GM12878 (cell line): ENCODE measurements at regions of chr11 and their contacts with region 1.

Region 1: GRCh38 chr11:108121274-108122155 is at the start of gene ACAT1:
- DNase-seq: peak; percentile 71
- ATAC-seq: peak; percentile 98
- H3K4me3 ChIP-seq: peak within 1 kb of the TSS; percentile 73
- H3K27ac ChIP-seq: peak within 1 kb of the TSS; percentile 65
- H3K4me1 ChIP-seq: peaks cover 10% of the 10 kb centered on the region
- H3K27me3 ChIP-seq: no peaks in the 10 kb centered on the region
- CTCF ChIP-seq: peak; percentile 7 to 39 (median 10); a peak in 1 of 6 replicates
- EP300 ChIP-seq: no peak
- POLR2A ChIP-seq: peak; percentile 98
- RAD21 ChIP-seq: no peak
- polyA plus RNA-seq, gene ACAT1: 58.2 to 93.5 TPM

Region 2: GRCh38 chr11:108289699-108290098 is 168.2 kb after region 1 on chr11:
- CTCF ChIA-PET with region 1: interaction called, 11 read pairs
- POLR2A ChIA-PET with region 1: no interaction called
- RAD21 ChIA-PET with region 1: no interaction called
- SMC1A ChIA-PET with region 1: no interaction called
- in situ Hi-C with region 1: no loop called
- intact Hi-C with region 1: no loop called
- DNase-seq: no peak
- ATAC-seq: no peak
- H3K4me3 ChIP-seq: no peak overlapping the region
- H3K27ac ChIP-seq: no peak overlapping the region
- H3K4me1 ChIP-seq: no peaks in the 10 kb centered on the region
- H3K27me3 ChIP-seq: no peaks in the 10 kb centered on the region
- CTCF ChIP-seq: no peak
- EP300 ChIP-seq: no peak
- POLR2A ChIP-seq: no peak
- RAD21 ChIP-seq: no peak